Pancreas (tissue), 10 donors: ENCODE measurements at regions of chr17 and their contacts with region 1.

Region 1: DNA sequence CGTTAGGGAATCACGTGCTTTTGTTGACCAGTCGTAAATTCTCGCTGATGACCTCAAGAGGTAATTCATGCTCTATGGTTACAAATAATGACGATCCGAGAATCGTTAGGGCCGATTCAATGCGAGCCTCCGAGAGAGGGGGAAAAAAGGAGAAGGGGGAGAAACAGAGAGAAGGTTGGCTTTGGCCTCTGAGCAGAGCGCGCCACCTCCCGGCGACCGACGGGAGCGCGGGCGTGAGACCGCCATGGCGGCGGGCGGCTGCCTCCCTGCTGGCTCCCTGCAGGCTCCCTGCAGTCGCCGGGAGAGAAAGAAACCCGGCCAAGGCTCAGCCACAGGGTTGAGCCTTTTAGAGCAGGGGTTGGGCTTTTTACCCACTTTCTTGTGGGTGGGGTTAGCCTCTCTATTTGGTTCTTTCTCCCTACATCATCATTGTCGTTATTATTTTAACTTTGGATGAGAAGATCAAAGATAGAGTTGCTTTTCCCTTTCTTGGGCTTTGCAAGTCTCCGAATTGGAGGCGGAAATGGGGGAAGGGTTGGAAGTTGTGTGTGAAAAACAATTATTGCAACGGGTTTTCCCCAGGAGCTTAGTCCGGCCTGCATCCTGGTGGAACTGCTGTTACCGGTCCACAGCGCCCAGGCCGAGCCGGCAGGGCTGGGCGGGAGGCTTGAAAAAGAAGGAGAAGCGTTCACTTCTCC is 410 bp upstream of the HOXB5 start:
- DNase-seq: peak in 4 of 6 donors; percentile 52 to 91 (median 72)
- ATAC-seq: peak; percentile 73 to 83 (median 80)
- H3K4me3 ChIP-seq: peak overlapping the region in 1 of 4 donors; percentile 7
- H3K27ac ChIP-seq: no peak overlapping the region
- H3K4me1 ChIP-seq: peaks cover 0 to 5% (median 0%) of the 10 kb centered on the region in 3 donors
- H3K27me3 ChIP-seq: peaks cover 0 to 76% (median 9%) of the 10 kb centered on the region in 4 donors
- CTCF ChIP-seq: peak; percentile 49 to 77 (median 68)

Region 2: GRCh38 chr17:48351831-48352332 is 242.1 kb before region 1 on chr17:
- intact Hi-C with region 1: loop called in 1 of 3 experiments (anchors 10 kb)
- DNase-seq: no peak
- ATAC-seq: peak in 3 of 4 donors; percentile 38 to 46 (median 39)
- H3K4me3 ChIP-seq: no peak overlapping the region
- H3K27ac ChIP-seq: no peak overlapping the region
- H3K4me1 ChIP-seq: no peaks in the 10 kb centered on the region
- H3K27me3 ChIP-seq: no peaks in the 10 kb centered on the region
- CTCF ChIP-seq: peak; percentile 18 to 61 (median 42)

Region 3: DNA sequence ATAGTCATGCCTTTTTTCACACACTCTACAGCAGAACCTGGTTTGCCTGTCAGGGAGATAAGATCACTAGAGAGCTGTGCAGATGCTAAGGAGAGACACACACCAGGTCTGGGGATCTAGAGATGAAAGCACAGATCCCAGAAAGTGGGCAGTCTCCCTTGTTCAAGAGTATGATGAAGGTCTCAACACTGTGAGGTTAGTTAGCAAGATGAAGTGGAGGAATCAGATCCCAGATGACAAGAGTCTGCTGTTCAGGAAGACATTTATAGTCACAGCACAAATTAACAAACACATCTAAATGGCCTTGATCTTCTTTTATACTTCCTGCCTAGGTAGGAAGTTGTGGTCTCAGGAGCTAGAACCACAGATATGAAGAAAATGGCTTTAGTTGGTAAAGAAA is 140.5 kb before region 1 on chr17:
- intact Hi-C with region 1: no loop called
- DNase-seq: no peak
- ATAC-seq: no peak
- H3K4me3 ChIP-seq: no peak overlapping the region
- H3K27ac ChIP-seq: no peak overlapping the region
- H3K4me1 ChIP-seq: no peaks in the 10 kb centered on the region
- H3K27me3 ChIP-seq: no peaks in the 10 kb centered on the region
- CTCF ChIP-seq: no peak

Region 4: GRCh38 chr17:48724251-48725003 is 130.4 kb after region 1 on chr17:
- intact Hi-C with region 1: no loop called
- DNase-seq: peak; percentile 72 to 95 (median 86)
- ATAC-seq: peak; percentile 82 to 94 (median 92)
- H3K4me3 ChIP-seq: no peak overlapping the region
- H3K27ac ChIP-seq: no peak overlapping the region
- H3K4me1 ChIP-seq: peaks cover 0 to 5% (median 0%) of the 10 kb centered on the region in 3 donors
- H3K27me3 ChIP-seq: peaks cover 8 to 81% (median 26%) of the 10 kb centered on the region in 4 donors
- CTCF ChIP-seq: peak in 3 of 4 donors; percentile 61